ENCODE measurements at regions of chr3 and their contacts with region 1.

Region 1: DNA sequence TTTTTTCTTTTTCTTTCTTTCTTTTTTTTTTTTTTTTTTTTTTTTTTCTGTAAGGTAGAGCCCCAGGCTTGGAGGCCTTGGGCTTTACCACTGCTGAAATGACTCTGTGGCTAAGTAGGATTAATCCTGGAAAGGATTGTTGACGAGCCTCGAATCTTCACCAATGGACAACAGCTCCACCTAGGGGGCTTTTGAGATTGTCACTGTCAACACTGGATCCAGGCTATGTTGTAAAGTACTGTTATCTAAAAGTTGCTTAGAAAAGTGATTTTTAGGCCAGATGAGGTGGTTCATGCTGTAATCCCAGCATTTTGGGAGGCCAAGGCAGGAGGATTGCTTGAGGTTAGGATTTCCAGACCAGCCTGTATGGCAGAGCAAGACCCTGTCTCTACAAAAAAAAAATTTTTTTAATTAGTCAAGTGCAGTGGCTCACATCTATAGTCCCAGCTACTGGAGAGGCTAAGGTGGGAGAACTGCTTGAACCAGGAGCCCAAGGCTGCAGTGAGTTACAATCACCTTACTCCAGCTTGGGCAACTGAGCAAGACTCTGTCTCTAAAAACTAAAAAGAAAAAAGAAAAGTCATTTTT is 41.6 kb downstream of the KLHL18 start:
- DNase-seq: peak; percentile 79
- H3K4me3 Mint-ChIP-seq: no peak overlapping the region
- H3K27ac Mint-ChIP-seq: no peak overlapping the region
- H3K4me1 Mint-ChIP-seq: peaks cover 9% of the 10 kb centered on the region
- H3K27me3 Mint-ChIP-seq: no peaks in the 10 kb centered on the region
- CTCF ChIP-seq: peak; percentile 68

Region 2: GRCh38 chr3:46866720-46867549 is 457.4 kb before region 1 on chr3:
- CTCF ChIA-PET with region 1: no interaction called
- POLR2A ChIA-PET with region 1: no interaction called
- intact Hi-C with region 1: loop called (anchors 1 kb)
- DNase-seq: peak; percentile 65
- H3K4me3 Mint-ChIP-seq: no peak overlapping the region
- H3K27ac Mint-ChIP-seq: no peak overlapping the region
- H3K4me1 Mint-ChIP-seq: peaks cover 11% of the 10 kb centered on the region
- H3K27me3 Mint-ChIP-seq: peaks cover 25% of the 10 kb centered on the region
- CTCF ChIP-seq: peak; percentile 81

Region 3: GRCh38 chr3:47096959-47097358 is 227.4 kb before region 1 on chr3:
- CTCF ChIA-PET with region 1: no interaction called
- POLR2A ChIA-PET with region 1: no interaction called
- intact Hi-C with region 1: loop called (anchors 10 kb)
- DNase-seq: no peak
- H3K4me3 Mint-ChIP-seq: no peak overlapping the region
- H3K27ac Mint-ChIP-seq: no peak overlapping the region
- H3K4me1 Mint-ChIP-seq: no peaks in the 10 kb centered on the region
- H3K27me3 Mint-ChIP-seq: no peaks in the 10 kb centered on the region
- CTCF ChIP-seq: no peak

Region 4: DNA sequence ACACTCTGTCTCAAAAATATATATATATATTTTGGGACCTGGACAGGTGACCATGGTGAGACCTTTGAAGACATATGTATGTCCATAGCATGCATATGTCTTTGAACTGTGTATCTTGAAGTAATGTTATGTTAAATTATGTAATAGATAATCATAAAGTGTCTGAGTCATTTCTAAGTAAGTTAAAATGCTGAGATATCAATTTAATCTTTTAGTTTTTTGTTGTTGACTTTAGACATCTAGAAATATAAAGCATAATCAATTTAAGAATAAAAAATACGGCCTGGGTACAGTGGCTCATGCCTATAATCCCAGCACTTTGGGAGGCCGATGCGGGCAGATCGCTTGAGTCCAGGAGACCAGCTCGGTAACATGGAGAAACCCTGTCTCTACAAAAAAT is 147.8 kb before region 1 on chr3:
- CTCF ChIA-PET with region 1: interaction called, 10 read pairs
- POLR2A ChIA-PET with region 1: interaction called, 3 read pairs
- intact Hi-C with region 1: no loop called
- DNase-seq: no peak
- H3K4me3 Mint-ChIP-seq: no peak overlapping the region
- H3K27ac Mint-ChIP-seq: no peak overlapping the region
- H3K4me1 Mint-ChIP-seq: no peaks in the 10 kb centered on the region
- H3K27me3 Mint-ChIP-seq: no peaks in the 10 kb centered on the region
- CTCF ChIP-seq: no peak

Region 5: DNA sequence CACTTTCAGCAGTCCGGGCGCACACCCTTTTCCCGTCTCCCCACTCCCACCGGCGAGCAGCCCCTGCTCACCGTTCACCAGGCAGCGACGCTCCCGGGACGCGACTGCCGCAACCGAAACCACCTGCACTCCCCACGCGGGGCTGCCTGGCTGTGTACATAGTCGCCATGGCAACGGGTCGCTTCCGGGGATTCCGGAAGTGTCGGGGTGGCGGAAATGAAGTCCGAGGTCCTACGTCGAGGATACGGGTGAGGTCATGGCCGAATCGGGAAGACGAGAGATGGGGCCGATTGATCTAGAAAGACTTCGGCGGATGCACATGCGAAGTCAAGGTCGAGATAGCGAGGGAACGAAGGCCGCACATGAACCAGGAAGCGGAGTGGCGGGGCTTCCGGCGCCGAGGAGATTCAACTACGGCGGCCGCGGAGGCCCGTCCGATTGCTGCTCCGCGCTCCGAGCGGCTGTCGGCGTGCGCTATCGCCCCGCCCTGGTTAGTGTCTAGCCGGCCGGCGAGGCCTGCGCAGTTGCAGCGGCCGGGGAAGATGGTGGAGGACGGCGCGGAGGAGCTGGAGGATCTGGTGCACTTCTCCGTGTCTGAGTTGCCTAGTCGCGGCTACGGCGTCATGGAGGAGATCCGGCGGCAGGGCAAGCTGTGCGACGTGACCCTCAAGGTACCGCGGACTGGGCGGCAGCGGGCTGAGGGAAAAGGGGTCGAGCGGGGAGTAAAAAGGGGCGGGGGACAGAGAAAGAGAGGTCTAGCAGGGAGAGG is 41.8 kb before region 1 on chr3 and contains the starts of genes KIF9 and KLHL18:
- CTCF ChIA-PET with region 1: interaction called, 4 read pairs
- POLR2A ChIA-PET with region 1: interaction called, 6 read pairs
- intact Hi-C with region 1: loop called (anchors 1 kb)
- DNase-seq: peak; percentile 92
- H3K4me3 Mint-ChIP-seq: peak within 1 kb of the TSS; percentile 93
- H3K27ac Mint-ChIP-seq: peak within 1 kb of the TSS; percentile 100
- H3K4me1 Mint-ChIP-seq: peaks cover 24% of the 10 kb centered on the region
- H3K27me3 Mint-ChIP-seq: no peaks in the 10 kb centered on the region
- CTCF ChIP-seq: no peak
- total RNA-seq, gene KIF9: 6.7 and 9.5 TPM in 2 replicates
- total RNA-seq, gene KLHL18: 36.4 and 36.6 TPM in 2 replicates